ENCODE measurements at regions of chr3 and their contacts with region 1.

Region 1: DNA sequence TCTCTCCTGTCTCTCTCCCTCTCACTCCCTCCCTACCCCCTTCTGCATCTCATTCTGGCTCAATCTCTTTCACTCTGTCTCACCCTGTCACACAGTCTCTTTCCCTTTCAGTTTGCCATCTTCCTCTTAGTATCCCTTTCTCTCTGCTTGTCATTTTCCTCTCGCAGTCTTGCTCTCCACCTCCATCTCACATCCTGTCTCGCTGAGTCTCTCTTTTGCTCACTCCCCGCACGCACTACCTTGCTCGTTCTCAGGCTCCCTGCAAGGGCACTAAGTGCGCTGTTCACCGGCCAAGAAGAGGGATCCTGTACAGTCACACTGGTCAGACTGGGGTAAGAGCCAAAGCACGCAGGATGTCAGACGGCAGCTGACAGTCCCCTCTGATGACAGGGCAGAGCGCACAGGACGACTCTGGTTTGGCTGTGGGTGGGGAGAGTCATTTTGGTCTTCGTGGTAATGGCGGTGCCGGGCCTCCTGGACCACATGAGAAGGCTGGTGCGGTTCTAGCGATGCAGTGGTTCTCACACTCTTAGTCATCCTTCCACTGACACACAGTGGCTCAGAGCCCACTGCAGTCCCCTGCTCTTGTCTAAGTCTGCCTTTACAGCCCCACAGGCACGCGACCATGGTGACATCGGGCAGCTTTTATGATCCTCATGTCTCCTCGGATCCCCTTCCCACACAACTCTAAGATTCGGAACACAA is 356.8 kb downstream of the FOXP1 start:
- DNase-seq: peak; percentile 95
- ATAC-seq: peak; percentile 88
- H3K4me3 Mint-ChIP-seq: peak overlapping the region; percentile 76
- H3K27ac Mint-ChIP-seq: peak overlapping the region; percentile 96
- H3K4me1 Mint-ChIP-seq: peaks cover 83% of the 10 kb centered on the region
- H3K27me3 Mint-ChIP-seq: no peaks in the 10 kb centered on the region
- CTCF ChIP-seq: no peak

Region 2: GRCh38 chr3:71087143-71088018 is 139.3 kb before region 1 on chr3:
- CTCF ChIA-PET with region 1: no interaction called
- POLR2A ChIA-PET with region 1: interaction called, 4 read pairs
- intact Hi-C with region 1: loop called (anchors 5 kb)
- DNase-seq: peak; percentile 71
- ATAC-seq: peak; percentile 72
- H3K4me3 Mint-ChIP-seq: peak overlapping the region; percentile 57
- H3K27ac Mint-ChIP-seq: peak overlapping the region; percentile 93
- H3K4me1 Mint-ChIP-seq: peaks cover 90% of the 10 kb centered on the region
- H3K27me3 Mint-ChIP-seq: no peaks in the 10 kb centered on the region
- CTCF ChIP-seq: no peak

Region 3: DNA sequence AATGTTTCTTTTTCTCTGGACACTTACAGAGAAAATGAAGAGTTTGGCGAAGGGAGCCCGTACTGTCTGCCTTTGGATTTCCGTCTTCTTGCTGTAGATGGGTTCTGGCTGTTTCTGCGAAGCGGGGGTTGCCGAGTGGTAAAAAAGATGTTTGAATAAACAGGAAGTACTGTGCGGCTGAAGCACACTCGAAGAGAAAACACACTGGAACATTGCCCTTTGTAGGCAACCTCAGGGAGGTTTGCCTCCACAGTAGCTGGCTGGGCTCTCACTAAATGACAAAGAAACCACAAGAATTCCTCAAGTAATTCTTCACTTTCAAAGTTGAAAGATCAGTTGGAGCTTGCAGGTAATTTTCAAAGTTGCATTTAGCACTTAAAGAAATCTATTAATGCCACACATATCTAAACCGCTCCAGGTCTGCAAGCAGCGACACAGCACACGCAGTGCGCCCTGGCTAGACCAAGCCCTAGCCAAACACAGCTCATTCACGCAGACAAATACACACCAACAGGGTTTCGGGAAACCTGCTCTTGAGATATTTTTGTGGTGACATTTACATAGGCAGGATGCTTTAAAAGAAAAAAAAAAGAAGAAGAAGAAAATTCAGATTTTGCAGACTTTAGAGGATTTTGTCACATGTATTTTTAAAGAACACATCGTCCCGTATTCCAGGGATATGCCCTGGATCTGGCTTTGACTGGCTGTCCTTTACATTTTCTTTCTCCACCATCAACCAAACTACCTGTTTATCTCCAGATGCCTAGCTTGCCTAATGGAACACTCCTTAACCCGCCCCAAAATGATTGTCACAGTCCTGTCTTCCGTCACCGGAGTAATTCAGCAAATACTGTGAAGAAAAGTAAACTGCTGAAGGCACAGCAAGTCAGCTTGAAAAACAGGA is 96.0 kb before region 1 on chr3:
- CTCF ChIA-PET with region 1: no interaction called
- POLR2A ChIA-PET with region 1: interaction called, 25 read pairs
- intact Hi-C with region 1: loop called (anchors 2 kb)
- DNase-seq: peak; percentile 87
- ATAC-seq: peak; percentile 62
- H3K4me3 Mint-ChIP-seq: peak overlapping the region; percentile 77
- H3K27ac Mint-ChIP-seq: peak overlapping the region; percentile 93
- H3K4me1 Mint-ChIP-seq: peaks cover 68% of the 10 kb centered on the region
- H3K27me3 Mint-ChIP-seq: no peaks in the 10 kb centered on the region
- CTCF ChIP-seq: no peak

Region 4: GRCh38 chr3:71195492-71195891 is 31.2 kb before region 1 on chr3:
- CTCF ChIA-PET with region 1: interaction called, 4 read pairs
- POLR2A ChIA-PET with region 1: interaction called, 5 read pairs
- intact Hi-C with region 1: loop called (anchors 2 kb)
- DNase-seq: no peak
- ATAC-seq: no peak
- H3K4me3 Mint-ChIP-seq: no peak overlapping the region
- H3K27ac Mint-ChIP-seq: peak overlapping the region; percentile 44
- H3K4me1 Mint-ChIP-seq: peaks cover 69% of the 10 kb centered on the region
- H3K27me3 Mint-ChIP-seq: no peaks in the 10 kb centered on the region
- CTCF ChIP-seq: no peak

Region 5: GRCh38 chr3:71210257-71211007 is 16.3 kb before region 1 on chr3:
- CTCF ChIA-PET with region 1: interaction called, 14 read pairs
- POLR2A ChIA-PET with region 1: interaction called, 4 read pairs
- intact Hi-C with region 1: no loop called
- DNase-seq: no peak
- ATAC-seq: peak; percentile 31
- H3K4me3 Mint-ChIP-seq: peak overlapping the region; percentile 33
- H3K27ac Mint-ChIP-seq: peak overlapping the region; percentile 83
- H3K4me1 Mint-ChIP-seq: peaks cover 81% of the 10 kb centered on the region
- H3K27me3 Mint-ChIP-seq: no peaks in the 10 kb centered on the region
- CTCF ChIP-seq: no peak

Region 6: GRCh38 chr3:71277341-71277740 is 50.6 kb after region 1 on chr3:
- CTCF ChIA-PET with region 1: no interaction called
- POLR2A ChIA-PET with region 1: no interaction called
- intact Hi-C with region 1: no loop called
- DNase-seq: no peak
- ATAC-seq: no peak
- H3K4me3 Mint-ChIP-seq: no peak overlapping the region
- H3K27ac Mint-ChIP-seq: peak overlapping the region; percentile 20
- H3K4me1 Mint-ChIP-seq: peaks cover 53% of the 10 kb centered on the region
- H3K27me3 Mint-ChIP-seq: no peaks in the 10 kb centered on the region
- CTCF ChIP-seq: no peak

Region 7: DNA sequence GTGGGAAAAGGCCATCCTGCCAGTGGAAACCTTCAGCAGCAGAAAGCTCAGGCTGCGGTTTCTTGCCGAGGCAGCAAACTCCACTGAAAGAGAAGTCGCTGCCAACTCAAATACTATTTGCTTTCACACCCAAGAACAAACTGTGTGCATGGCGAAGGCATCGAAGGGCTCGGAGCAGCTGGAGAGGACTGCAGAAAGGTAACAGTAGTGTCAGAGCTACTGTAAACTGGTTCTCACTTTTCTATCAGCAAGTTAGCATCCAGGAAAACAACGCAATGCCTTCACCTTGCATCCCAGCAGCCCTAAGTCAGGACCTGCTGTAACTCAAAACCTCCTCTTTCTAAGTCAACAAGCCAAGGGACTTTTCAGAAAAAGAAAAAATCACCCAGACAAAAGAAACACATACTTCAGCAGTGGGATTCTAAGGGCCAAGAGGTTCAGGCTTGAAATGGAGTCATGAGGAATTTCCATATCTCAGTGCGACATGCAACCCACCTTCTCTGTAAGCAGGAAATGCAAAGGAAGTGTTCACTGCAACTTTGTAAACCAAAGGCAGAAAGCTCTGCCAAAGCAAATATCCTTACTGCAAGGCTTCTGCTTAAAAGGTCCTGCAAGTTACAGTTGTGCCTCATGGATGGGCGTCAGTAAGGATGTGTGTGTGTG is 163.3 kb after region 1 on chr3:
- CTCF ChIA-PET with region 1: no interaction called
- POLR2A ChIA-PET with region 1: interaction called, 3 read pairs
- intact Hi-C with region 1: loop called (anchors 5 kb)
- DNase-seq: peak; percentile 48
- ATAC-seq: peak; percentile 25
- H3K4me3 Mint-ChIP-seq: peak overlapping the region; percentile 72
- H3K27ac Mint-ChIP-seq: peak overlapping the region; percentile 94
- H3K4me1 Mint-ChIP-seq: peaks cover 72% of the 10 kb centered on the region
- H3K27me3 Mint-ChIP-seq: no peaks in the 10 kb centered on the region
- CTCF ChIP-seq: no peak

Region 8: GRCh38 chr3:71495708-71496472 is 269.2 kb after region 1 on chr3:
- CTCF ChIA-PET with region 1: interaction called, 3 read pairs
- POLR2A ChIA-PET with region 1: no interaction called
- intact Hi-C with region 1: loop called (anchors 10 kb)
- DNase-seq: peak; percentile 59
- ATAC-seq: peak; percentile 63
- H3K4me3 Mint-ChIP-seq: peak overlapping the region; percentile 64
- H3K27ac Mint-ChIP-seq: peak overlapping the region; percentile 95
- H3K4me1 Mint-ChIP-seq: peaks cover 82% of the 10 kb centered on the region
- H3K27me3 Mint-ChIP-seq: no peaks in the 10 kb centered on the region
- CTCF ChIP-seq: no peak